ENCODE measurements at regions of chr14 and their contacts with region 1.

Region 1: DNA sequence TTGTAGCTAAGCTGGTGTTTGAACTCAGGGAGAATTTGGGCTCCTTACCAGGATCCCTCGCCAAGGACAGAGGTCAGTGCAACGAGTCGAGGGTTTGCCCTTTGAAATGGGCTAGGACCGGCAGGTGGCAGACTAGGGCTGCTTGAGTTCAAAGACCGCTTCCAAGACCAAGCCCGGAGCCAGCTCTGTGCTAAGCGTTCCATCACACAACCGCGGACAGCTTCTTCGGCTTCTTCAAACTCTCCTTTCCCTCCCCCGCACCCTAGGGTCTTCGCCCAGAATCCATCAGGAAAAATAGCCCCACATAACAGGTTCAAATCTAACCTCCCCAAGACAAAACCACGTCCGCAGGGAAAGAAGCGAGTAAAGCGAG is 705 bp upstream of the FLVCR2 start:
- DNase-seq: peak; percentile 94
- ATAC-seq: peak; percentile 89

Region 2: GRCh38 chr14:75549169-75549568 is 28.5 kb before region 1 on chr14:
- intact Hi-C with region 1: no loop called
- DNase-seq: no peak
- ATAC-seq: peak; percentile 29

Region 3: GRCh38 chr14:75653563-75653962 is 75.8 kb after region 1 on chr14:
- intact Hi-C with region 1: loop called (anchors 1 kb)
- DNase-seq: no peak
- ATAC-seq: no peak

Region 4: DNA sequence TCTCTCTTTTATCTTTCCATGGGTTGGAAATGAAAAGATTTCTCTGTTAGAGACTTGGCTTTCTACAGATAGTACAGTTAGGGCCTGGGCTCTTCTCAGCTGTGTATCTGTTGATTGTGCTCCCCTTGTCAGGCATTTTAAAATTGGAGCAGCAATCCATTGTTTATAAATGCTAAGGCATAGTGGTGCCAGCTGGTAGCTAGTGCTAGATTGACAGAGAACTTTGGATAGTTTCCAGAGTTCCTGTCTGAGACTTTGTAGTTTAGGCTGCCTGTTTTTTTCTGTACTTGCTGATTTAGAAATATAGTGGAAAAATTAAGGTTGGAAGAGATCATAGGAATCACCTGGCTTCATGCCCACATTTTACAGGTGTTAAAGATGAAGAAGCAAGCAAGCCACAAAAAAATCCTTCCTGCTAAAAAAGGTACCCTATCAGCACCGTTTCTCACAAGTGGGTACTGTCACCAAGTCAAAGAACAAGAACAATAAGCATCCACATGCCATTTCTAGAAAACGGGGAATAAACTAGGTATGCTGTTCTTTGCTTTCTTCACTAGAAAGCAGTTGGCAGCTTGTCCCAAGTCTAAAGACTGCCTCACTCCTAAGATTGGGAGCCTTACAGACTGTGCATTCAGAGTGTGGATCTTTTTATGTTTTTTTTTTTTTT is 89.5 kb after region 1 on chr14:
- intact Hi-C with region 1: no loop called
- DNase-seq: no peak
- ATAC-seq: no peak

Measured in sciatic nerve (tissue), 2 donors.